ENCODE measurements at regions of chr20 and their contacts with region 1.

Region 1: GRCh38 chr20:3101737-3102574 is 17.4 kb upstream of the AVP start:
- DNase-seq: no peak
- H3K4me3 ChIP-seq: no peak overlapping the region
- H3K27ac ChIP-seq: no peak overlapping the region
- H3K4me1 ChIP-seq: no peaks in the 10 kb centered on the region
- H3K27me3 ChIP-seq: no peaks in the 10 kb centered on the region
- CTCF ChIP-seq: no peak

Region 2: GRCh38 chr20:3146732-3147341 is 44.9 kb after region 1 on chr20:
- CTCF ChIA-PET with region 1: no interaction called
- dilution Hi-C with region 1: loop called (anchors 5 kb)
- in situ Hi-C with region 1: no loop called
- intact Hi-C with region 1: no loop called
- DNase-seq: no peak
- H3K4me3 ChIP-seq: no peak overlapping the region
- H3K27ac ChIP-seq: no peak overlapping the region
- H3K4me1 ChIP-seq: no peaks in the 10 kb centered on the region
- H3K27me3 ChIP-seq: no peaks in the 10 kb centered on the region
- CTCF ChIP-seq: no peak

Measured in mammary epithelial cell (primary cell).